Activated CD4-positive, alpha-beta T cell treated with anti-CD3 and anti-CD28 coated beads, Interleukin-2, amount 10 ng/mL, durations not matched to agents 24 days and 14 days (primary cell): ENCODE measurements at regions of chr6 and their contacts with region 1.

Region 1: GRCh38 chr6:137033828-137034227 is 10.9 kb downstream of the IL20RA start:
- DNase-seq: peak; percentile 90
- H3K4me3 Mint-ChIP-seq: peak overlapping the region; percentile 22
- H3K27ac Mint-ChIP-seq: peak overlapping the region; percentile 59
- H3K4me1 Mint-ChIP-seq: peaks cover 10% of the 10 kb centered on the region
- H3K27me3 Mint-ChIP-seq: peaks cover 68% of the 10 kb centered on the region

Region 2: GRCh38 chr6:137102851-137103492 is 69.1 kb after region 1 on chr6:
- intact Hi-C with region 1: loop called (anchors 5 kb)
- DNase-seq: peak; percentile 81
- H3K4me3 Mint-ChIP-seq: peak overlapping the region; percentile 33
- H3K27ac Mint-ChIP-seq: peak overlapping the region; percentile 83
- H3K4me1 Mint-ChIP-seq: peaks cover 38% of the 10 kb centered on the region
- H3K27me3 Mint-ChIP-seq: no peaks in the 10 kb centered on the region

Region 3: GRCh38 chr6:137224799-137225198 is 191.0 kb after region 1 on chr6:
- intact Hi-C with region 1: loop called (anchors 5 kb)
- DNase-seq: no peak
- H3K4me3 Mint-ChIP-seq: no peak overlapping the region
- H3K27ac Mint-ChIP-seq: no peak overlapping the region
- H3K4me1 Mint-ChIP-seq: peaks cover 44% of the 10 kb centered on the region
- H3K27me3 Mint-ChIP-seq: peaks cover 8% of the 10 kb centered on the region